ENCODE measurements at regions of chr4 and their contacts with region 1.

Region 1: GRCh38 chr4:155822572-155822971 is 43.5 kb downstream of the ASIC5 start:
- DNase-seq: no peak
- H3K4me3 ChIP-seq: no peak overlapping the region
- H3K27ac ChIP-seq: no peak overlapping the region
- H3K4me1 ChIP-seq: no peaks in the 10 kb centered on the region
- H3K27me3 ChIP-seq: no peaks in the 10 kb centered on the region
- CTCF ChIP-seq: no peak

Region 2: GRCh38 chr4:155509555-155509954 is 313.0 kb before region 1 on chr4:
- intact Hi-C with region 1: no loop called
- DNase-seq: peak in 2 of 5 donors; percentile 36 to 61
- H3K4me3 ChIP-seq: no peak overlapping the region
- H3K27ac ChIP-seq: no peak overlapping the region
- H3K4me1 ChIP-seq: peaks cover 0 to 2% (median 0%) of the 10 kb centered on the region in 3 donors
- H3K27me3 ChIP-seq: no peaks in the 10 kb centered on the region
- CTCF ChIP-seq: no peak

Region 3: GRCh38 chr4:155929833-155930232 is 107.3 kb after region 1 on chr4:
- intact Hi-C with region 1: loop called (anchors 10 kb)
- DNase-seq: no peak
- H3K4me3 ChIP-seq: no peak overlapping the region
- H3K27ac ChIP-seq: no peak overlapping the region
- H3K4me1 ChIP-seq: no peaks in the 10 kb centered on the region
- H3K27me3 ChIP-seq: no peaks in the 10 kb centered on the region
- CTCF ChIP-seq: no peak

Measured in kidney (tissue), 22 donors.